ENCODE measurements at regions of chr3 and their contacts with region 1.

Region 1: DNA sequence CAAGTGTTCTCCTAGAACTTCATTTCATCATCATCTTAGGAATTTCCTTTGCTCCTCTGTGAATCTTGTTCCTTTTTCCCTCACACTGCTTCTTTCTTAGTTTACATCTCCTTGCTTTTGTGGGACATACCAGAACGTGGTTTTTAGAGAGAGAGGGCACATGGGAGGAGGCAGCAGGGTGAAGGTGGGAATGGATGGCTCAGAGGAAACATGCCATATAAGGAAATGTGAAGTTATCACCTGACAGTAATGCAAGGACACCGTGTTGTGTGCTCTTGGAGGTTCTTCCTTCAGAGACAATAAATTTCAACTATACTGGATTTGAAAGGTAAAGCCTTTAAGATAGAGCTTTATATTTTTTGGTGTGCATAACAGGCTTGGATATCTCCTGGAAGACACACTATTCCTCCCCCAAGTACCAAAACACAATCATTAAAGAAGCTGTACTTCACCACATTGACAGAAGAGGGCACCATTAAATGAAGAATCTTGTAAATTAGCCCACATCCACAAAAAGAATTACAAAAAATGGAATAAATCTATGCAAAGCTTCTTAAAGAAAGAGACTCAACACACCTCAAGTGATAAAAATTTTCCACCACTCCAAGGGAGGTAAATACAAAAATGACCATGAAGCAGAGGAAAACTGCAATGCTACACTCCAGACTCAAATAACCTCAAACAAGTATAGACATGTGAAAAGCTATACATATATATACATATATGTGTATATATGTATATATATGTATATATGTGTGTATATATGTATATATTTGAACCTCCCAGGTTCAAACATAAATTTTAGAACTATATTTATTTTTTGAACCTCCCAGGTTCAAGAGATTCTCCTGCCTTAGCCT is 26.1 kb downstream of the RPL39L start:
- DNase-seq: no peak
- H3K4me3 ChIP-seq: no peak overlapping the region
- H3K4me3 Mint-ChIP-seq: no peak overlapping the region
- H3K27ac Mint-ChIP-seq: no peak overlapping the region
- H3K4me1 ChIP-seq: no peaks in the 10 kb centered on the region
- H3K4me1 Mint-ChIP-seq: peaks cover 7% of the 10 kb centered on the region
- H3K27me3 ChIP-seq: no peaks in the 10 kb centered on the region
- H3K27me3 Mint-ChIP-seq: peaks cover 2% of the 10 kb centered on the region
- CTCF ChIP-seq: peak; percentile 41 to 63

Region 2: DNA sequence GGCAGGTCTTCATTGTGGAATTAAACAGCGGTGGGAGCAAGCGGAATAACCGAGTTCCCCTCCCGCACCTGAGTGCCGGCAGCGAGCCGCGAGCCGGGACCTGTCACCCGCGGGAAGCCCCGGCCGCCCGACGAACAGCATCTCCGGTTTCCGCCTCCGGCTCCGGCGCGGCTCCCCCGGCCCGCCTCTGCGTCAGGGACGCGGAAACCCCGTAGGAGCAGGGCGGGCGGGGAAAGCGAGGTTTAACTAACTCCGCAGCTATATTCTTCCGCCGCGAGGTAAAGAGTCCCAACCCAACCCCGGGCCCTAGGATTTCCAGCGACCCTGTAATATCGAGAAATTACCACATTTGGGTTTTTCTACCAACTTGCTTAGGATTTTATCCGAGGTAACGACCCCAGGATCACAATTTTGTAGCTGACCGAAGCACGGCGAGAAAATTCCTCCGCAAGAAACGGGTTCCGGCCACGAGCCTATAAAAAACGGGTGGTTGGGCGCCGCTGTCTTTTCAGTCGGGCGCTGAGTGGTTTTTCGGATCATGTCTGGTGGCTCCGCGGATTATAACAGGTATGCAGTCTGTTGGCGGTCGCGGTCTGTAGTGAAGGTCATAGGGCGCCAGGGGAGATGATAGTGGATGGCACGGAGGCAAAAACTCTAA is 330.0 kb before region 1 on chr3 and contains the start of gene EIF4A2:
- CTCF ChIA-PET with region 1: no interaction called
- POLR2A ChIA-PET with region 1: no interaction called
- intact Hi-C with region 1: no loop called
- DNase-seq: peak; percentile 85 to 93
- H3K4me3 ChIP-seq: peak within 1 kb of the TSS; percentile 88
- H3K4me3 Mint-ChIP-seq: peak within 1 kb of the TSS; percentile 80
- H3K27ac Mint-ChIP-seq: peak within 1 kb of the TSS; percentile 95
- H3K4me1 ChIP-seq: peaks cover 13% of the 10 kb centered on the region; the same call in 1 of the 2 replicates
- H3K4me1 Mint-ChIP-seq: peaks cover 16% of the 10 kb centered on the region
- H3K27me3 ChIP-seq: no peaks in the 10 kb centered on the region
- H3K27me3 Mint-ChIP-seq: no peaks in the 10 kb centered on the region
- CTCF ChIP-seq: no peak
- total RNA-seq, gene EIF4A2: 346 and 359 TPM in 2 replicates

Region 3: GRCh38 chr3:187139126-187139894 is 26.1 kb after region 1 on chr3 and contains the start of gene RPL39L:
- CTCF ChIA-PET with region 1: interaction called, 4 read pairs
- POLR2A ChIA-PET with region 1: no interaction called
- intact Hi-C with region 1: loop called (anchors 1 kb)
- DNase-seq: peak; percentile 55 to 67
- H3K4me3 ChIP-seq: peak within 1 kb of the TSS; percentile 44
- H3K4me3 Mint-ChIP-seq: peak within 1 kb of the TSS; percentile 72
- H3K27ac Mint-ChIP-seq: peak within 1 kb of the TSS; percentile 12
- H3K4me1 ChIP-seq: no peaks in the 10 kb centered on the region
- H3K4me1 Mint-ChIP-seq: no peaks in the 10 kb centered on the region
- H3K27me3 ChIP-seq: no peaks in the 10 kb centered on the region
- H3K27me3 Mint-ChIP-seq: no peaks in the 10 kb centered on the region
- CTCF ChIP-seq: peak; percentile 54 to 57
- total RNA-seq, gene RPL39L: 1.8 and 2.5 TPM in 2 replicates

Measured in Caco-2 (cell line).